Vagina (tissue), 2 donors: ENCODE measurements at regions of chr5 and their contacts with region 1.

Region 1: GRCh38 chr5:129199308-129199707 is 104.8 kb downstream of the ISOC1 start:
- DNase-seq: no peak
- H3K4me3 ChIP-seq: no peak overlapping the region
- H3K27ac ChIP-seq: no peak overlapping the region
- H3K4me1 ChIP-seq: no peaks in the 10 kb centered on the region
- H3K27me3 ChIP-seq: no peaks in the 10 kb centered on the region
- CTCF ChIP-seq: no peak
- POLR2A ChIP-seq: no peak

Region 2: DNA sequence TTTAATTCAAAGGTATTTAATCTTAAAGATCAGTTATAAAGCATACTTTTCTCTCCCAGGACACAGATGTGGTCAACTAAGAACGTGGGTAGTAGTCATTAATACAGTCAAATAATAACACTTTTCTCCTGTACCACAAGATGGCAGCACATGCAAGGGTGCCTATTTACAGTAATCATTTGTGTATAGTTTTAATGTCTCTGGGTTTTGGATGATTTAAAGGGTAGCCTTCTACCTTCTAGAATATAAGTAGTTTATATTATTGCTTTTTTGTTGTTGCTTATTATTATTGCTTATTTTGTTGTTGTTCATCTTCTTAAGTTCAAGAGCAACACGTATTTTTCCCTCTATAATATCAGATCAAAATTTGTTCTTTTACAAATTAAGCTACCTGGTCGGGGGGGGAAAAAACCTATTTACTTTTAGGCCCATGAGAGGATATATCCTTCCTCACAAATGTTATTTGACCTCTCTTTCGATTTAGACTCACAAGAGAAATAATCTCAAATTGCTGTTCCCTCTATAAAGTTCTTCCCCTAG is 293.7 kb before region 1 on chr5:
- intact Hi-C with region 1: no loop called
- DNase-seq: no peak
- H3K4me3 ChIP-seq: no peak overlapping the region
- H3K27ac ChIP-seq: no peak overlapping the region
- H3K4me1 ChIP-seq: no peaks in the 10 kb centered on the region
- H3K27me3 ChIP-seq: no peaks in the 10 kb centered on the region
- CTCF ChIP-seq: peak; percentile 48 to 69 (median 56)
- POLR2A ChIP-seq: no peak

Region 3: GRCh38 chr5:130126746-130127145 is 927.4 kb after region 1 on chr5:
- intact Hi-C with region 1: loop called (anchors 5 kb)
- DNase-seq: no peak
- H3K4me3 ChIP-seq: no peak overlapping the region
- H3K27ac ChIP-seq: no peak overlapping the region
- H3K4me1 ChIP-seq: no peaks in the 10 kb centered on the region
- H3K27me3 ChIP-seq: no peaks in the 10 kb centered on the region
- CTCF ChIP-seq: no peak
- POLR2A ChIP-seq: no peak